ENCODE measurements at regions of chr5 and their contacts with region 1.

Region 1: GRCh38 chr5:1763548-1763911 is 36.1 kb downstream of the MRPL36 start:
- DNase-seq: no peak
- ATAC-seq: no peak
- H3K4me3 ChIP-seq: no peak overlapping the region
- H3K27ac ChIP-seq: no peak overlapping the region
- H3K4me1 ChIP-seq: no peaks in the 10 kb centered on the region
- H3K27me3 ChIP-seq: peaks cover 0 to 38% (median 12%) of the 10 kb centered on the region in 3 donors
- CTCF ChIP-seq: peak; percentile 57

Region 2: DNA sequence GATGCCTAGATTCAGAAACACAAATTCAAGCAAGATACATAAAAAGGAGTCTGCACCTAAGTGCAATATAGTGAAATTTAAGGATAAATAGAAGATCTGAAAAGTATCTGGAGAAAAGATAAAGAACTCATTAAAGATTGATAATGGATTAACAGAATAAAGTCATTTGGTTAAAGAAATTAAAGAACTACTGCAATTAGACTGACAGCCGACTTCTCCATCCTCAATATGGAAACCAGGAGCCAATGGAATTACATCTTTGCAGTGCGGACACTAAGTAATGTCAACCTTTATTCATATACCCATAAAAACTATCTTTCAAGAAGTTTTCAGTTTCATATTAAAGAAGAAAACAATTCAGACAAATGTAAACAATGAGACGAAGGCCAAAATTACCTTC is 44.9 kb before region 1 on chr5:
- intact Hi-C with region 1: no loop called
- DNase-seq: no peak
- ATAC-seq: no peak
- H3K4me3 ChIP-seq: no peak overlapping the region
- H3K27ac ChIP-seq: no peak overlapping the region
- H3K4me1 ChIP-seq: no peaks in the 10 kb centered on the region
- H3K27me3 ChIP-seq: peaks cover 0 to 3% (median 0%) of the 10 kb centered on the region in 3 donors
- CTCF ChIP-seq: no peak

Region 3: DNA sequence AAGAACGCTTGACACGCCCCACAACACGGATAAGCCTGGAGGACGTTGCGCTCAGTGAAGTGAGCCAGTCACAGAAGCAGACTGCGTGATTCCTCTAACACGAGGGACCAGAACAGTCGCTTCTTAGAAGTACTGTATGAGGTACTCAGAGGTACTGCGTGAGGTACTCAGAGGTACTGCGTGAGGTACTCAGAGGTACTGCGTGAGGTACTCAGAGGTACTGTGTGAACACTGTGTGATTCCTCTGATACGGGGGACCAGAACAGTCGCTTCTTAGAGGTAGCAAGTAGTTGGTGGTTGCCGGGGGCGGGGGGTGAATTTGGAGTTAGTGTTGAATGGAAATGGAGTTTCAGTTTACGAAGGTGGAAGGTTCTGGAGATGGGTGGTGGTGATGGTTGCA is 43.4 kb after region 1 on chr5:
- intact Hi-C with region 1: loop called in 1 of 2 experiments (anchors 1 kb)
- DNase-seq: no peak
- ATAC-seq: no peak
- H3K4me3 ChIP-seq: no peak overlapping the region
- H3K27ac ChIP-seq: no peak overlapping the region
- H3K4me1 ChIP-seq: peaks cover 34% of the 10 kb centered on the region
- H3K27me3 ChIP-seq: no peaks in the 10 kb centered on the region
- CTCF ChIP-seq: no peak

Region 4: GRCh38 chr5:1874771-1875220 is 111.3 kb after region 1 on chr5:
- intact Hi-C with region 1: no loop called
- DNase-seq: no peak
- ATAC-seq: no peak
- H3K4me3 ChIP-seq: no peak overlapping the region
- H3K27ac ChIP-seq: no peak overlapping the region
- H3K4me1 ChIP-seq: no peaks in the 10 kb centered on the region
- H3K27me3 ChIP-seq: peaks cover 0 to 68% (median 25%) of the 10 kb centered on the region in 3 donors
- CTCF ChIP-seq: no peak

Region 5: DNA sequence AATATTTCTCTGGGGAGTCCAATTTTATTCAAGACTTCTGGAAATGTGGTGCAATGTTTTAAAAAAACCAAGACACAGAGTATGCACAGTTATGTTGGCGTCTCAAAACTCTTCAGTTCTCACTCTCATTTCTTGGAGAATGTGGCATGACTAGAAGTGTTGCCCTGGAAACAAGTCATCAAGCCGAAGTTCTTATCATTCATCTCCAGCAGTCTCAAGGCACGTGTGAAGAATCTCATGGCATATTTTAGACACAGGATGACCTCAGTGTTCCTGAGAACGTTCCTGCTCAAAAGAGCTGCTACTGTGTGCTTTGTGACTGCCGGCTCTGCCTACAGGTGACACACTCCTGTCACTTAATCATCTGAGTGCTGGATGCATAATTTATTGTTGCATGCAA is 266.6 kb after region 1 on chr5:
- intact Hi-C with region 1: loop called in 1 of 2 experiments (anchors 5 kb)
- DNase-seq: no peak
- ATAC-seq: no peak
- H3K4me3 ChIP-seq: no peak overlapping the region
- H3K27ac ChIP-seq: no peak overlapping the region
- H3K4me1 ChIP-seq: no peaks in the 10 kb centered on the region
- H3K27me3 ChIP-seq: peaks cover 0 to 8% (median 0%) of the 10 kb centered on the region in 3 donors
- CTCF ChIP-seq: no peak

Region 6: DNA sequence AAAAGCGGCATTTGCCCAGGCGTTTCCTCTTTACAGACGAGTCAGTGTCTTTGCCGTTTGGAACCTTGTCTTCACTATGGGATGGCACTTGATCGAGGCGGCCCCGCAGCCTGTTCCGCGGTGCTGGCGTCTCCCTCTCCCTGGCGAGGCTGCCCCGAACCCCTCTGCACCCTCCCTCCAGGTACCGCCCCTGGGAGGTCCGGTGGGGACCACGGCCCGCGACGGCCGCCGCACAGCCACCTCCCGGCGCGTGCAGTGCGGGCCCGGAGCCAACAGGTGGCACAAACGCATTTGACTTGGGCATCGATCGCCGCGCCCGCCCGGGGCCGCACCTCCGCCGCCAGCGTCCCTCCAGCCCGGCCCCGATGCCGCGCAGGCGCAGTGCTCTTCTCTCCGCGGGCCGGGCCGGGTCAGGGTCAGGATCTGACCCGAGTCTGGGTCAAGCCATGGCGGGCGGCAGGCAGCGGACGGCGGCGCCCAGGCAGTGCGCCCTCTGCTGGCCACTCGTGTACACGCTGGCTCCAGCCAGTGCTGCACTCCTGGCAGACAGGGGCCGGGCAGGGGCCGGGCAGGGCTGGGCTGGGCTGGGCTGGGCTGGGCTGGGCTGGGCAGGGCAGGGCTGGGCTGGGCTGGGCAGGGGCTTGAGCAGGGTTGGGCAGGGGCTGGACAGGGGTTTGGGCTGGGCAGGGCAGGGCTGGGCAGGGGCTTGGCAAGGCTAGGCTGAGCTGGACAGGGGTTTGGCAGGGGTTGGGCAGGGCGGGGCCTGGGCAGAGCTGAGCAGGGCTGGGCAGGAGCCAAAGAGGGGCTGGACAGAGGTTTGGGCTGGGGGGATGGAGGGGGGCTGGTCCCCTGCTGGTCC is 275.0 kb after region 1 on chr5:
- intact Hi-C with region 1: loop called (anchors 2 to 5 kb)
- DNase-seq: peak; percentile 69 to 80
- ATAC-seq: peak; percentile 78 to 93 (median 86)
- H3K4me3 ChIP-seq: peak overlapping the region; percentile 60
- H3K27ac ChIP-seq: no peak overlapping the region
- H3K4me1 ChIP-seq: no peaks in the 10 kb centered on the region
- H3K27me3 ChIP-seq: peaks cover 0 to 21% (median 0%) of the 10 kb centered on the region in 3 donors
- CTCF ChIP-seq: peak; percentile 62

Region 7: DNA sequence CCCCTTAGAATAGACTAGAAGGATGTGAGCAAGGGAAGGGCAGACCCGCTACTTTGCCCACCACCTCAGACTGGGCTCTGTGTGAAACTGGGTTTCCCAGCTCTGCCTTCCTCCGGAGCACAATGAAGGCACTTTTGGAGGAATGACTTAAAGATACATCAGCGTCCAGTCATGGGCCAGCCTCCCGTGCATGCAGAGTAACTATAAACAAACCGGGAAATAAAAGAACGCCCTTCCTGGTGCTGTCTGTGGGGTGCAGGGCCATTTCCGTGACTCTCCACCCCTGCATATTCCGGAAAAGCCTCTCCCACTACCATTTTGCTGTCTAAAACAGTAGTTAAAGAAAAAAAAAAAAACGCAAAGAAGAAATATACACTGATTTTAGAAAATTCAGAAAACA is 285.1 kb after region 1 on chr5:
- intact Hi-C with region 1: no loop called
- DNase-seq: no peak
- ATAC-seq: no peak
- H3K4me3 ChIP-seq: no peak overlapping the region
- H3K27ac ChIP-seq: no peak overlapping the region
- H3K4me1 ChIP-seq: no peaks in the 10 kb centered on the region
- H3K27me3 ChIP-seq: peaks cover 0 to 3% (median 0%) of the 10 kb centered on the region in 3 donors
- CTCF ChIP-seq: no peak